ENCODE measurements at regions of chr12 and their contacts with region 1.

Region 1: GRCh38 chr12:42568952-42569915 is 20.3 kb downstream of the PRICKLE1 start:
- DNase-seq: peak; percentile 72
- ATAC-seq: no peak
- H3K4me3 ChIP-seq: no peak overlapping the region
- H3K4me3 Mint-ChIP-seq: no peak overlapping the region
- H3K27ac ChIP-seq: no peak overlapping the region
- H3K27ac Mint-ChIP-seq: no peak overlapping the region
- H3K4me1 ChIP-seq: no peaks in the 10 kb centered on the region
- H3K4me1 Mint-ChIP-seq: peaks cover 5% of the 10 kb centered on the region
- H3K27me3 ChIP-seq: no peaks in the 10 kb centered on the region
- H3K27me3 Mint-ChIP-seq: no peaks in the 10 kb centered on the region
- CTCF ChIP-seq: peak; percentile 79

Region 2: DNA sequence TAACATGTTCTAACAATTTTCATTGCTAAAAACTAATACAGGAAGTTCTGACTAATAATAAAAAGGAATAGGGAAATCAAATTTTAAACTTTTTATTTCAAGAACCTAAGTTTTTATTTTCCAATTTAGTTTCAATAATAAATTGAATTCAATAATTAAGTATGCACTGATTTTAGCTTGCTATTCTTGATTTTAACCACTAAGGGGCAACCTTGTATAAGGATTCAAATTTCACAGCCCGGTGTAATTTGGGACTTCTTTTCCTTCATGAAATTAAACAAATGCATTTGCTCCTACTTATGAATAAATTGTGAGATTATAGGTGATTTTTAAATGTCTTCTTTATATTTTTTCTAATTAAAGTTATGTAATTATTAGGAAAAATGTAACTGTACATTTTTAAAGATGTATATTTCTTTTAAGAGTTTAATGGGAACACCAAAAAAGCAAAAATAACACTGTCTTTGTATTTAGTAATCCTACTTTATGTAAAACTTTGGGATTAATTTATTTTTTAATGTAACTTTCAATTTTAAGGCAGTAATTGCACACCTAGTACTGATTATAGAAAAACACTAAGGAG is 1622.5 kb before region 1 on chr12:
- CTCF ChIA-PET with region 1: interaction called, 11 read pairs
- POLR2A ChIA-PET with region 1: no interaction called
- intact Hi-C with region 1: no loop called
- DNase-seq: peak; percentile 38
- ATAC-seq: no peak
- H3K4me3 ChIP-seq: no peak overlapping the region
- H3K4me3 Mint-ChIP-seq: no peak overlapping the region
- H3K27ac ChIP-seq: no peak overlapping the region
- H3K27ac Mint-ChIP-seq: no peak overlapping the region
- H3K4me1 ChIP-seq: no peaks in the 10 kb centered on the region
- H3K4me1 Mint-ChIP-seq: no peaks in the 10 kb centered on the region
- H3K27me3 ChIP-seq: peaks cover 0 to 3% (median 0%) of the 10 kb centered on the region in 4 experiments
- H3K27me3 Mint-ChIP-seq: peaks cover 9% of the 10 kb centered on the region
- CTCF ChIP-seq: peak; percentile 88

Region 3: GRCh38 chr12:41277116-41277945 is 1291.9 kb before region 1 on chr12:
- CTCF ChIA-PET with region 1: interaction called, 10 read pairs
- POLR2A ChIA-PET with region 1: no interaction called
- intact Hi-C with region 1: no loop called
- DNase-seq: peak; percentile 44
- ATAC-seq: no peak
- H3K4me3 ChIP-seq: no peak overlapping the region
- H3K4me3 Mint-ChIP-seq: no peak overlapping the region
- H3K27ac ChIP-seq: no peak overlapping the region
- H3K27ac Mint-ChIP-seq: no peak overlapping the region
- H3K4me1 ChIP-seq: peaks cover 0 to 13% of the 10 kb centered on the region in 2 donors
- H3K4me1 Mint-ChIP-seq: no peaks in the 10 kb centered on the region
- H3K27me3 ChIP-seq: no peaks in the 10 kb centered on the region
- H3K27me3 Mint-ChIP-seq: peaks cover 9% of the 10 kb centered on the region
- CTCF ChIP-seq: peak; percentile 73

Region 4: DNA sequence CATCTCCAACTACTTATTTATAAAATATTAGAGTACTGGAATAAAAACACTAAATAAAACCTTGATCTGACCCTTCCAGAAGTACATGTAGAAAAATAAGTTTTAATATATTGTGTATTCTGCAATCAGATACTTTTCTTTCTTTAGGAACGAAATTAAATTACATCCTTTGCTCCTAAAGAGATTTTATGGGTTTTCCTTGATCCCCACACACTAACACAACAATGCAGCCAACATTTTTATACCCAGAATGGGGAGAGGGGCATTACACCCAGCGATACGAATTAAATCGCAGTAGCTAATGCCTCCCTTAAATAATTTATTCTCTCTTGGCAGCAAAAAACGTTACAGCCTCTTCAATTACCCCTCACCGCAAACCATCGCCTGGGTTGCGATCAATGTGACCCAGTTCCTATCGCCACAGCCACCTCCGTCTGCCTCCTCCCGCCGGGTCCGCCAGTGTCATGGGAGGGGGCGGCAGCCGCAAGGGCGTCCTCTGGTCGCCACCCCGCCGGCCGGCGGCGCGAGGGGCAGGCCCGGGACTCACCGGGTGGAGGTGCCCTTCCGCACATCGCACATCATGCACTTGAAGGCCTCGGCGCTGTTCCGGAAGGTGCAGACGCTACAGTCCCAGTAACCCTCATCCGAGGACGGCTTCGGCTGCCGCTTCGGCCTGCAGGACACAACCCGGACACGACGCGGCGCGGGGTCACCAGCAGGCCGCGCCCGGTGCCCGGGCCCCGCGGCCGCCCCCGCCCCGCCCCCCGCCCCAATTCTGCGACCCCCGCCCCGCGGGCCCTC is 332.0 kb before region 1 on chr12:
- CTCF ChIA-PET with region 1: interaction called, 3 read pairs
- POLR2A ChIA-PET with region 1: no interaction called
- intact Hi-C with region 1: loop called (anchors 2 kb)
- DNase-seq: peak; percentile 84
- ATAC-seq: peak; percentile 74
- H3K4me3 ChIP-seq: peak overlapping the region; percentile 48 to 84 (median 66)
- H3K4me3 Mint-ChIP-seq: peak overlapping the region; percentile 98
- H3K27ac ChIP-seq: peak overlapping the region; percentile 28 to 74
- H3K27ac Mint-ChIP-seq: peak overlapping the region; percentile 95
- H3K4me1 ChIP-seq: peaks cover 15 to 27% of the 10 kb centered on the region in 2 donors
- H3K4me1 Mint-ChIP-seq: peaks cover 35% of the 10 kb centered on the region
- H3K27me3 ChIP-seq: no peaks in the 10 kb centered on the region
- H3K27me3 Mint-ChIP-seq: no peaks in the 10 kb centered on the region
- CTCF ChIP-seq: peak; percentile 53

Region 5: DNA sequence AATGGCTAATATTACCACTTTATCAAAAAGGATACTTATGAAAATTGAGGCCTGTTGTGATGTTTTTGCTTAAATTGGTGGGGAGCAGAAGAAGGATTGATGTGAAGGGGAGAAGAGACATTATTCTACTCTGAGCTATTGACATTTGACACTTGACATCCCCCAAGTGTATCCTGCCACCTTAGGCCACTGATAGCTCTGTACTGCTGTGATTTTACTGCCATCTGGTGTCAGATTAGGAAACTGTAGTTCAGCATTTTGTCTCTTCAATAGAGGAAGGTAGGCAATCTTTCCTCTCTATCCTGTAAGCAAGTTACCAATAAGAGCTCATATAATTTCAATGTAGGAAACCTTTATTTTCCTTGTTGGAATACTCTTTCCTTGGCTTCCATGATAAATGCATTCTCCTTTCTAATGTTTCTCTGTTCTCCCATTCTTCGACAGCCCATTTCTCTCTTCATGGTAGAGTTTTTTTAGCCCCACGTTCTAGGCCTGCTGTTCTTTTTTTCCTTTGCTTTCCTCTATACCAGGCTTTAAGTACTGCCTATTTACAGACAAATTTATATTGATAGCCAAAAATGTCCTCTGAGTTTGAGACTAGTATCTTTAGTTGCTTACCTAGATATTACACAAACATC is 197.0 kb before region 1 on chr12:
- CTCF ChIA-PET with region 1: interaction called, 28 read pairs
- POLR2A ChIA-PET with region 1: no interaction called
- intact Hi-C with region 1: loop called (anchors 5 kb)
- DNase-seq: peak; percentile 76
- ATAC-seq: peak; percentile 92
- H3K4me3 ChIP-seq: no peak overlapping the region
- H3K4me3 Mint-ChIP-seq: no peak overlapping the region
- H3K27ac ChIP-seq: no peak overlapping the region
- H3K27ac Mint-ChIP-seq: no peak overlapping the region
- H3K4me1 ChIP-seq: peaks cover 4 to 5% of the 10 kb centered on the region in 2 donors
- H3K4me1 Mint-ChIP-seq: peaks cover 14% of the 10 kb centered on the region
- H3K27me3 ChIP-seq: no peaks in the 10 kb centered on the region
- H3K27me3 Mint-ChIP-seq: no peaks in the 10 kb centered on the region
- CTCF ChIP-seq: peak; percentile 89

Region 6: DNA sequence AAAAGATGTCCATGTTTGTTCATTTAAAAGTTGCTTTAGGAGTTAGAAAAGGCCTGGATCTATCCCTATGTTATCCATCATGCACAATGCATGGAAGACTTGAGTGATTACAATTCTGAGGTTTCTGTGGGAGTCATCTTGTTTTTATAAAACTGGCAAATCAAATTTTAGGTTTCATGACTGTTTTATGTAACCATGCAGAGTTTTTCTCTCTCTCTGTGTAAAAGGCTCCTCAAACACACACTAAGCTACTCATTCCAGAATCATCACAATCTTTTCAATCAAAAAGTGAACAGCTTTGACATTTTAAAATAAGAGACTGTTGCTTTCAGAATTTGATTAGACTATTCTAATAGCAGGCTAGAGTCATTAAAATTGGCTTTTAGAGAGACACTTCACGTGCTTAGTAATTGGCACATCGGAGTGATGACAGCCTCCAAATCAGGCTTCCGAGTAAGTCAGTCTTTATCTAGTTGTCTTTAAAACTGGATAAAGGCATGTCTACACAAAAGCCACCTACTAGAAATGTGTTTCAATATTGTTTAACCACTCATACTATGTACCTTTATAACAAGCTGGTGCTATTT is 11.6 kb before region 1 on chr12:
- CTCF ChIA-PET with region 1: interaction called, 30 read pairs
- POLR2A ChIA-PET with region 1: no interaction called
- intact Hi-C with region 1: no loop called
- DNase-seq: no peak
- ATAC-seq: no peak
- H3K4me3 ChIP-seq: no peak overlapping the region
- H3K4me3 Mint-ChIP-seq: no peak overlapping the region
- H3K27ac ChIP-seq: no peak overlapping the region
- H3K27ac Mint-ChIP-seq: no peak overlapping the region
- H3K4me1 ChIP-seq: no peaks in the 10 kb centered on the region
- H3K4me1 Mint-ChIP-seq: no peaks in the 10 kb centered on the region
- H3K27me3 ChIP-seq: peaks cover 0 to 3% (median 0%) of the 10 kb centered on the region in 4 experiments
- H3K27me3 Mint-ChIP-seq: peaks cover 4% of the 10 kb centered on the region
- CTCF ChIP-seq: no peak

Measured in B cell (primary cell).